GM12878 (cell line): ENCODE measurements at regions of chr13 and their contacts with region 1.

Region 1: GRCh38 chr13:41955605-41956004 is 5.3 kb downstream of the VWA8 start:
- DNase-seq: no peak
- ATAC-seq: peak; percentile 64
- H3K4me3 ChIP-seq: no peak overlapping the region
- H3K27ac ChIP-seq: no peak overlapping the region
- H3K4me1 ChIP-seq: peaks cover 4% of the 10 kb centered on the region; the same call in 1 of the 2 replicates
- H3K27me3 ChIP-seq: no peaks in the 10 kb centered on the region
- CTCF ChIP-seq: no peak
- EP300 ChIP-seq: no peak
- POLR2A ChIP-seq: no peak
- RAD21 ChIP-seq: no peak

Region 2: GRCh38 chr13:40490086-40490758 is 1465.4 kb before region 1 on chr13:
- CTCF ChIA-PET with region 1: no interaction called
- POLR2A ChIA-PET with region 1: no interaction called
- RAD21 ChIA-PET with region 1: no interaction called
- SMC1A ChIA-PET with region 1: no interaction called
- in situ Hi-C with region 1: no loop called
- intact Hi-C with region 1: no loop called
- DNase-seq: no peak
- ATAC-seq: peak; percentile 10; the same call in 2 of the 3 replicates
- H3K4me3 ChIP-seq: no peak overlapping the region
- H3K27ac ChIP-seq: no peak overlapping the region
- H3K4me1 ChIP-seq: peaks cover 11% of the 10 kb centered on the region
- H3K27me3 ChIP-seq: no peaks in the 10 kb centered on the region; a peak in 1 of 4 replicates
- CTCF ChIP-seq: no peak
- EP300 ChIP-seq: no peak
- POLR2A ChIP-seq: no peak
- RAD21 ChIP-seq: no peak

Region 3: GRCh38 chr13:41931337-41931736 is 24.3 kb before region 1 on chr13:
- CTCF ChIA-PET with region 1: interaction called, 3 read pairs
- POLR2A ChIA-PET with region 1: no interaction called
- RAD21 ChIA-PET with region 1: interaction called, 4 read pairs
- SMC1A ChIA-PET with region 1: interaction called, 10 read pairs
- in situ Hi-C with region 1: no loop called
- intact Hi-C with region 1: no loop called
- DNase-seq: no peak
- ATAC-seq: no peak
- H3K4me3 ChIP-seq: no peak overlapping the region
- H3K27ac ChIP-seq: no peak overlapping the region
- H3K4me1 ChIP-seq: peaks cover 4% of the 10 kb centered on the region; the same call in 1 of the 2 replicates
- H3K27me3 ChIP-seq: no peaks in the 10 kb centered on the region
- CTCF ChIP-seq: no peak
- EP300 ChIP-seq: no peak
- POLR2A ChIP-seq: no peak
- RAD21 ChIP-seq: no peak

Region 4: DNA sequence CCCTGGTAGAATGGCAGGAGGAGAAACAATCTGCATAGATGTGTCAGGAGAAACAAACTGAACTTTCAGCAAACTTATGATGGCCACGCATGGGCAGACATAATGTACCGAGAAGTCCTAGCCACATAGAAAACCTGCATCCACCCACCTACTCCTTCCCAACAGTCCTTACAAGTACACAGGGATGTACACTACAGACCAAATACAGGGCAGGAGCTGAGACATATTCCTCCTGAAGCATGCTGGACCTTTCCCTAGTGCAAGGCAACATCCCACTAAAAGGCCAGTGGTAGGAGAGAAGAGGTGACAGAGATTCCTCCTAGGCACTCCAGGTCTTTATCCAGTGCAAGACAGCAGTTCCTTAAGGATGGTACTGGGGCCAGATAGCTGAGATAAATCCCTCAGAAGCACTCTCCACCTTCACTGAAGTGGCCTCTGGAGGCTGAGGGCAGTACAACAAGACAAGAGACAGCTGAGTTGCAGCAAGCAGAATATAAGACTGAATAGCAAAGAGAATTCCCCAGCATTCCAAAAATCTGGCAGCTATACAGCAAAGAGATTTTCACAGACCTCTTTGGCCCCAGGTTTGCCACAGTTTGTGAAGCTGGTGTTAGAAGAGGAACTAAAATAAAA is 13.0 kb before region 1 on chr13:
- CTCF ChIA-PET with region 1: interaction called, 6 read pairs
- POLR2A ChIA-PET with region 1: interaction called, 3 read pairs
- RAD21 ChIA-PET with region 1: interaction called, 12 read pairs
- SMC1A ChIA-PET with region 1: interaction called, 10 read pairs
- in situ Hi-C with region 1: no loop called
- intact Hi-C with region 1: no loop called
- DNase-seq: no peak
- ATAC-seq: peak; percentile 93
- H3K4me3 ChIP-seq: no peak overlapping the region
- H3K27ac ChIP-seq: no peak overlapping the region
- H3K4me1 ChIP-seq: no peaks in the 10 kb centered on the region
- H3K27me3 ChIP-seq: no peaks in the 10 kb centered on the region
- CTCF ChIP-seq: peak; percentile 31 to 39 (median 34); a peak in 4 of 6 replicates
- EP300 ChIP-seq: no peak
- POLR2A ChIP-seq: no peak
- RAD21 ChIP-seq: peak; percentile 55

Region 5: DNA sequence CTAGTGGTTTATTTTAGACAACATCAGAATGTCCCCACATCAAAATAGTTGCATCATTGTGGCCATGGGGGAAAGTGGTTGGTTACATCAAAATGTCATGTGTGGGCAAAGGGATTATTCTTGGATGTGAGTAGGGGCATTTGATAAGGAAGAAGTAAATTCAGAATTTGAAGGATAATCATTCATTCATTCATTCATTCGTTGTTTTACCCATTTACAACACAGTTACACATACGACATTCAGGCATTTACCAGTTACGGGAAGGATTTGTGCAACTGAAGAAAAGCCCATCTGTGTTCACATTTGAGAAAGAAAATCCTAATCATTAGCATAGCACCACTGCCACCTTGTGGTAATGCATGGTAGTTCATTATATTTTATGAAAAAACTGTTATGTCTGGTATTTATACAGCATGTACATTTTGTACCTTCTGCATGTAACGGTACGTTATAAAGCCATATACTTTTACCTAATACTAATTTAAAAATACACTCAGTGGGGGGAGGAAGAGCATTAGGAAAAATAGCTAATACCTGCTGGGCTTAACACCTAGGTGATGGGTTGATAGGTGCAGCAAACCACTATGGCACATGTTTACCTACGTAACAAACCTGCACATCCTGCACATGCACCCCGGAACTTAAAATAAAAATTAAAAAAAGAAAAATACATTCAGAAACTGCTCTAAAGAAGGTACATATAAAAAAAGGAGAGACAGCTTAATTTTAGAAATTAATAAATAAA is 155.0 kb after region 1 on chr13:
- CTCF ChIA-PET with region 1: no interaction called
- POLR2A ChIA-PET with region 1: interaction called, 4 read pairs
- RAD21 ChIA-PET with region 1: interaction called, 3 read pairs
- SMC1A ChIA-PET with region 1: interaction called, 4 read pairs
- in situ Hi-C with region 1: no loop called
- intact Hi-C with region 1: loop called (anchors 5 kb)
- DNase-seq: peak; percentile 68
- ATAC-seq: peak; percentile 74
- H3K4me3 ChIP-seq: no peak overlapping the region
- H3K27ac ChIP-seq: no peak overlapping the region
- H3K4me1 ChIP-seq: 0 out of 2 replicates have a peak, but pooled peaks cover 3% of the 10 kb centered on the region
- H3K27me3 ChIP-seq: no peaks in the 10 kb centered on the region
- CTCF ChIP-seq: peak; percentile 54 to 84 (median 66); a peak in 5 of 6 replicates
- EP300 ChIP-seq: no peak
- POLR2A ChIP-seq: no peak
- RAD21 ChIP-seq: peak; percentile 87